ENCODE measurements at regions of chrX and their contacts with region 1.

Region 1: GRCh38 chrX:17736856-17737706 is at the start of gene SCML1:
- DNase-seq: peak; percentile 95
- H3K4me3 Mint-ChIP-seq: peak within 1 kb of the TSS; percentile 84
- H3K27ac Mint-ChIP-seq: peak within 1 kb of the TSS; percentile 88
- H3K4me1 Mint-ChIP-seq: peaks cover 26% of the 10 kb centered on the region
- H3K27me3 Mint-ChIP-seq: no peaks in the 10 kb centered on the region
- total RNA-seq, gene SCML1: 11.4 to 11.8 TPM

Region 2: GRCh38 chrX:16719334-16720084 is 1017.6 kb before region 1 on chrX and contains the start of gene SYAP1:
- CTCF ChIA-PET with region 1: no interaction called
- intact Hi-C with region 1: loop called (anchors 10 kb)
- DNase-seq: peak; percentile 93
- H3K4me3 Mint-ChIP-seq: peak within 1 kb of the TSS; percentile 89
- H3K27ac Mint-ChIP-seq: peak within 1 kb of the TSS; percentile 92
- H3K4me1 Mint-ChIP-seq: peaks cover 33% of the 10 kb centered on the region
- H3K27me3 Mint-ChIP-seq: no peaks in the 10 kb centered on the region
- total RNA-seq, gene SYAP1: 17.1 to 18.9 TPM

Region 3: DNA sequence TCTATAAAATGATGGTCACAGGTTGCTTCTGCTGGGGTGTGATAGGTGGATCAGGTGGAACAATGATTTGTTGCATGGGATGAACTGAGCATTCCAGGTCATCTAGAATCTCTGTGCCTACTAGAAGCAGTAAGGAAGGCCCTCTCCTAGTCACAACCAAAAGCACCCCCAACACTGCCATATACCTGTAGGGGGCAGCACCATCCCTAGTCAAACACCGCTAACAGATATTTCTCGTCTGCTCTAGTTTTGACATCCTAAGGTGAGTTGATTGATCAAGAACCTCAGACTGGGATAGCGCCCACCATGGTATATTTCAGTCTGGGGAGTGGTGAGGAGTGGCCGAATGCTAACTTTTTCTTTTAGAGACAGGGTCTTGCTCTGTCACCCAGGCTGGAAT is 201.9 kb before region 1 on chrX:
- CTCF ChIA-PET with region 1: interaction called, 3 read pairs
- intact Hi-C with region 1: loop called (anchors 1 kb)
- DNase-seq: peak; percentile 73
- H3K4me3 Mint-ChIP-seq: no peak overlapping the region
- H3K27ac Mint-ChIP-seq: peak overlapping the region; percentile 18
- H3K4me1 Mint-ChIP-seq: peaks cover 28% of the 10 kb centered on the region
- H3K27me3 Mint-ChIP-seq: no peaks in the 10 kb centered on the region

Region 4: DNA sequence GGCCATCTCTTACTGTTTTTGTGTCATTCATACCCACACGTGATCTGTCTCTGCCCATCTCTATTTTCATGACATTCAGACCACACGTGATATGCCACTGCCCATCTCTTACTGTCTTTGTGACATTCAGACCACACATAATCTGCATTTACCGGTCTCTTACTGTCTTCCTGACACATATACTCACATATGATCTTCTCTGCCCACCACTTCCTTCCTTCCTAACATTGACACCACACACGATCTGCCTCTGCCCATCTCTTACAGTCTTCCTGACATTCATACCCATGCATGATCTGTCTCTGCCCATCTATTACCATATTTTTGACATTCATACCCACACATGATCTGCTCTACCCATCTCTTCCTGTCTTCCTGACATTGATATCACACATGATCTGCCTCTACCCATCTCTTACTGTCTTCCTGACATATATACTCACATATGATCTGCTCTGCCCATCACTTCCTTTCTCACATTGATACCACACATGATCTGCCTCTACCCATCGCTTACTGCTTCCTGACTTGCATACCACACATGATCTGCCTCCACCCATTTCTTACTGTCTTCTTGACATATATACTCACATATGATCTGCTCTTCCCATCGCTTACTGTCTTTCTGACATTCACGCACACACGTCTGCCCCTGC is 36.3 kb after region 1 on chrX:
- CTCF ChIA-PET with region 1: no interaction called
- intact Hi-C with region 1: loop called (anchors 2 kb)
- DNase-seq: no peak
- H3K4me3 Mint-ChIP-seq: no peak overlapping the region
- H3K27ac Mint-ChIP-seq: no peak overlapping the region
- H3K4me1 Mint-ChIP-seq: peaks cover 11% of the 10 kb centered on the region
- H3K27me3 Mint-ChIP-seq: no peaks in the 10 kb centered on the region

Region 5: GRCh38 chrX:17987783-17988182 is 250.7 kb after region 1 on chrX:
- CTCF ChIA-PET with region 1: no interaction called
- intact Hi-C with region 1: loop called (anchors 5 kb)
- DNase-seq: peak; percentile 4
- H3K4me3 Mint-ChIP-seq: no peak overlapping the region
- H3K27ac Mint-ChIP-seq: no peak overlapping the region
- H3K4me1 Mint-ChIP-seq: peaks cover 31% of the 10 kb centered on the region
- H3K27me3 Mint-ChIP-seq: no peaks in the 10 kb centered on the region

Region 6: GRCh38 chrX:18002791-18003190 is 265.7 kb after region 1 on chrX:
- CTCF ChIA-PET with region 1: no interaction called
- intact Hi-C with region 1: no loop called
- DNase-seq: no peak
- H3K4me3 Mint-ChIP-seq: no peak overlapping the region
- H3K27ac Mint-ChIP-seq: no peak overlapping the region
- H3K4me1 Mint-ChIP-seq: no peaks in the 10 kb centered on the region
- H3K27me3 Mint-ChIP-seq: no peaks in the 10 kb centered on the region

Region 7: DNA sequence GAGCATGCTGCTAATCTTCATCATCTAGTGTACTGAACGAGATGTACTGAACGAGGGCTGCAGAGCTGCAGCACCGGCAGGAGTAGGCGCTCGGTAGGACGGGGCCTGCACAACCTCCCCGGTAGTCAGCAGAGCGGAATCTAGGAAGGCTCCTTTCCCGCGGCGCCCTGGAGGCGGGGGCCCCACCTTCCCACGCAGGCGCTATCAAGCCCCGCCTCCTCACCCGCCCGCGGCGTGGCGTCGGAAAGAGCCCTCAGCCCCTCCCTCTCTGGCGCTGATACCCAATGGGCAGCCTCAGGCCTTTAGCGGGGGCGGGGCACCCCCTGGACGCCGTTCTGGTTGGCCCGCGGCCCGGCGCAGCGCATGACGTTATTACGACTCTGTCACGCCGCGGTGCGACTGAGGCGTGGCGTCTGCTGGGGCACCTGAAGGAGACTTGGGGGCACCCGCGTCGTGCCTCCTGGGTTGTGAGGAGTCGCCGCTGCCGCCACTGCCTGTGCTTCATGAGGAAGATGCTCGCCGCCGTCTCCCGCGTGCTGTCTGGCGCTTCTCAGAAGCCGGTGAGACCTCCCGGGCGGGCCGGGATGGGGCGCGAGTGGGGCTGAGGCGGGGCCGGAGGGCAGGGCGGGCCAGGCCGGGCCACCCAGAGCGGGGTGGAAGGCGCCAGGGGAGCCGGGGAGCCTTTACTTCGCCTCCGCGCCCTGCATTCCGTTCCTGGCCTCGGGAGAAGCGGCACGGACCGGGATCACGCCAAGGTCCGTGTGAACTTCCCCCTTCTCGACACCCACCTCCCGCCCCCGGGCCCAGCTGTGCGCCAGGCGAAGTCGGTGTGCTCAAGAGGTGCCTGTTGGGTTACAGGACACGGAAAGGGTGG is 1606.7 kb after region 1 on chrX and contains the start of gene PDHA1:
- CTCF ChIA-PET with region 1: no interaction called
- intact Hi-C with region 1: loop called (anchors 2 kb)
- DNase-seq: peak; percentile 94
- H3K4me3 Mint-ChIP-seq: peak within 1 kb of the TSS; percentile 83
- H3K27ac Mint-ChIP-seq: peak within 1 kb of the TSS; percentile 78
- H3K4me1 Mint-ChIP-seq: peaks cover 21% of the 10 kb centered on the region
- H3K27me3 Mint-ChIP-seq: no peaks in the 10 kb centered on the region
- total RNA-seq, gene PDHA1: 233 to 242 TPM